ENCODE measurements at regions of chr19 and their contacts with region 1.

Region 1: DNA sequence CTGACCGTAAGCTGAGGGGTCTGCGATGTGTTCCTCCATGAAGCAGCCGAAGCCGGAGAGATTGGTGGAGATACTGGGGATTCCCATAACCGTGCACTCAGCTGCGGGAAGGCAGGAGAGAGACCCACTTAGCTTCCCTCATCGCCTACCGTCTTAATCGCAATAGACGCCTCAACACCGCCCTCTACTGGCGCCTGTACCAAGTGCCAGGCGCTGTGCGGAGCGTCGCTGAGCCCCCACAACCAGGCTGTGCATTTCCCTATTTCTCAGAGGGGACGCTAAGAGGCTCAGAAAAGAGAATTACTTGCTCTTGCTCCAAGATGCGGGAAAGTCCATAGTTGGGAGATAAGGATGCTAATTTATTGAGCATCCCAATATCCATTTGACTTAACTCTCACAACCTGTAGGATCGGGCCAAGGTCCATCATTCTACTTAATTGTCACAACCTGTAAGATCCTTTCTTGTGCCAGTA is 5.8 kb downstream of the FTL start:
- DNase-seq: peak; percentile 87
- ATAC-seq: peak; percentile 52
- H3K4me3 Mint-ChIP-seq: no peak overlapping the region
- H3K27ac Mint-ChIP-seq: no peak overlapping the region
- H3K4me1 Mint-ChIP-seq: peaks cover 31% of the 10 kb centered on the region
- H3K27me3 Mint-ChIP-seq: no peaks in the 10 kb centered on the region

Region 2: DNA sequence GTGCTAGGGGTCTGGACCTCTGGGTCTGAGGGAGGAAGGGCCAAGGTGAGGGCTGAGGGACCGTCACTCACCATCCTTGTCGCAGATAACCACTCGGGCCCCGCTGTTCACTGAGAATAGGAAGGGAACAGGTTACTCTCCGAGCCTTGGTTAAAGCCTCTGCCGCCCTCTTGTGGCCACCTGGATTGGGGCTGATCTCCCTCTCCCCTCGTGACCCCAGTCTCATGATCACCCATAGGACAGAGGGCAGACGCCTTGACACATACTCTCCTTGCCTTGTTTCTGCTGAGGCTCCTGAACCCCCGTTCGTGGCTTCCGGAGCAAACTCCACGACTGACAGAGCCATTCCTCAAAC is 135.2 kb before region 1 on chr19:
- CTCF ChIA-PET with region 1: interaction called, 27 read pairs
- DNase-seq: peak; percentile 97
- ATAC-seq: peak; percentile 92
- H3K4me3 Mint-ChIP-seq: peak overlapping the region; percentile 76
- H3K27ac Mint-ChIP-seq: peak overlapping the region; percentile 86
- H3K4me1 Mint-ChIP-seq: peaks cover 16% of the 10 kb centered on the region
- H3K27me3 Mint-ChIP-seq: no peaks in the 10 kb centered on the region

Region 3: DNA sequence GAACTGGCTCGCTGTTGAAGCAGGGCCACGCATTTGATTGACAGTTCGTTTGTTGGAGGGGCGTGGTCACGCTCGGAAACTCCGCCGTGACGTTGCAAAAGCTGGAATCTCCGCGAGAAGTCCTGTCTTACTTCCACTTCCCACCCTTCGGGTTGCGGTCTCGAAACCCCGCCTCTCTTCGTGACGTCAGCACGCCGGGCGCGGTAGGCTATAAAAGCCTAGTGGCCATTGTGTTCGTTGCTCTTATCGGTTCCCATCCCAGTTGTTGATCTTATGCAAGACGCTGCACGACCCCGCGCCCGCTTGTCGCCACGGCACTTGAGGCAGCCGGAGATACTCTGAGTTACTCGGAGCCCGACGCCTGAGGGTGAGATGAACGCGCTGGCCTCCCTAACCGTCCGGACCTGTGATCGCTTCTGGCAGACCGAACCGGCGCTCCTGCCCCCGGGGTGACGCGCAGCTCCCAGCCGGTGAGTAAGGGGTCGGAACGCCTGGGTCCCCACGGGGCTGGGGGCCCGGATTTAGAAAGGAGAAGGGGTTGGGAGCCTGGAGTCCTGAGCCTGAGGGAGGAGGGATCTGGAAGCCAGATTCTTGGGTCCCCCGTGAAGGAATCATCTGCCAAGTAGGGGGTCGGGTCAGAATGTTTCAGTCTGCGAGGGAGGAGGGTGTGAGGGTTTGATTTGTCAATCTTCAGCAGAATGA is 98.6 kb before region 1 on chr19 and contains the start of gene PPP1R15A:
- CTCF ChIA-PET with region 1: interaction called, 10 read pairs
- DNase-seq: peak; percentile 99
- ATAC-seq: peak; percentile 35
- H3K4me3 Mint-ChIP-seq: peak within 1 kb of the TSS; percentile 98
- H3K27ac Mint-ChIP-seq: peak within 1 kb of the TSS; percentile 100
- H3K4me1 Mint-ChIP-seq: peaks cover 39% of the 10 kb centered on the region
- H3K27me3 Mint-ChIP-seq: peaks cover 5% of the 10 kb centered on the region
- total RNA-seq, gene PPP1R15A: 32.1 to 89.7 TPM

Region 4: DNA sequence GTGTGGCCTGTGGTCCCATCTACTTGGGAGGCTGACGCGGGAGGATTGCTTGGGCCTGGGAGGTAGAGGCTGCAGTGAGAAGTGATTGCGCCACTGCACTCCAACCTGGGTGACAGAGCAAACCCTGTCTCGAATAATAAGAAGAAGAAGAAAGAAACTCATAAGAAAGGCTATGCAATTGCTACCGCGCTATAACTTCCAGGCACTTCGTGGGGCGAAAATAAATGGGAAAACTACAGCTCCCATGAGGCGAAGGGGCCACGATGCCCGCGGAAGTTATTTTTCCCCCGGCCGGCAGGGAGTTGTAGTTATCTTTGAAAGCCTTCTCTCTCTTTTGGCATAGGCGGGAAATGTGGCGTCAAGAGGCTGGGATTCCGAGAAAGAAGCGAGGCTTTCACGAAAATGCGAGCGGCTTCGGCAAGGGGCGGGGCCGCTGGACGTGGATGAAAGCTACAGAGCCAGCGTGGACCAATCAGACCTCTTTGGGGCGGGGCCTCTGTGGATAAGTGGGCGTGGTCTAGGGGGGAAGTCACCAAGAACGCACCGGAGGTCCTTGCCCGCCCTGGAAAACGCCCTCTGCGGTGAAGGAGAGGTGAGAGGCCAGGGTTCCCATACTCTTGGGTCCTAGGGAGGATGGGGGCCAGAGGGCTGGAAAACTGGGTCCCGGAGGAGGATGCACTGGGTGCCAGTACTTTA is 71.0 kb before region 1 on chr19 and contains the start of gene NUCB1:
- CTCF ChIA-PET with region 1: interaction called, 16 read pairs
- DNase-seq: peak; percentile 100
- ATAC-seq: peak; percentile 92
- H3K4me3 Mint-ChIP-seq: peak within 1 kb of the TSS; percentile 98
- H3K27ac Mint-ChIP-seq: peak within 1 kb of the TSS; percentile 98
- H3K4me1 Mint-ChIP-seq: peaks cover 33% of the 10 kb centered on the region
- H3K27me3 Mint-ChIP-seq: peaks cover 17% of the 10 kb centered on the region
- total RNA-seq, gene NUCB1: 185 to 226 TPM

Region 5: DNA sequence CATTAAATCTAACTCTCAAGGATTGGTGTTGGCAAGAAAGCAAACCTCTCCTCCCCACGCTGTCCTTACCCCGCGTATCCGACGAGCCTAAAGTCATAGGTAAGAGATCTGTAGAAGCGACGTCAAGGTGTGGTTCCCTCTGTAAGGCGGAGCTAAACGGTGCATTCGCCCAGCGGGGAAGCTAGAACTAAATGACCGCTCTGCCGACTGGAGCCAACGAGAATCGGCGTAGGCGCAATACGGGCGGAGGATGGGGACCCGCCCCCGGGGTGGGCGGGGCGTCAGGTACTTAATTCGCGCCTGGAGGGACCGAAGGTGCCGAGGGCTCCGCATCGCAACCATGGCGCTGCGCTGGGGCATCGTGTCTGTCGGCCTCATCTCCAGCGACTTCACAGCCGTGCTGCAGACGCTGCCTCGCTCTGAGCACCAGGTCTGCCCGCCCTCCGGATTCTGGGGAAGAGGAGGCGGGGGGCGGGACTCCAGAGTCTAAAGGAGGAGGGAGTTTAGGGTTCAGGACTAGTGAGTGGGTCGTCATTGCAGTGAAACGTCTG is 37.5 kb before region 1 on chr19 and contains the start of gene DHDH:
- CTCF ChIA-PET with region 1: interaction called, 14 read pairs
- DNase-seq: peak; percentile 90
- ATAC-seq: peak; percentile 99
- H3K4me3 Mint-ChIP-seq: peak within 1 kb of the TSS; percentile 78
- H3K27ac Mint-ChIP-seq: peak within 1 kb of the TSS; percentile 67
- H3K4me1 Mint-ChIP-seq: peaks cover 16% of the 10 kb centered on the region
- H3K27me3 Mint-ChIP-seq: peaks cover 11% of the 10 kb centered on the region
- total RNA-seq, gene DHDH: 0.96 to 1.1 TPM

Region 6: GRCh38 chr19:48954595-48955310 is 16.2 kb before region 1 on chr19 and contains the start of gene BAX:
- CTCF ChIA-PET with region 1: interaction called, 13 read pairs
- DNase-seq: peak; percentile 98
- ATAC-seq: peak; percentile 87
- H3K4me3 Mint-ChIP-seq: peak within 1 kb of the TSS; percentile 80
- H3K27ac Mint-ChIP-seq: peak within 1 kb of the TSS; percentile 84
- H3K4me1 Mint-ChIP-seq: peaks cover 45% of the 10 kb centered on the region
- H3K27me3 Mint-ChIP-seq: no peaks in the 10 kb centered on the region
- total RNA-seq, gene BAX: 359 to 377 TPM

Measured in activated CD8-positive, alpha-beta memory T cell treated with anti-CD3 and anti-CD28 coated beads, Interleukin-2, amount 10 ng/mL, durations not matched to agents 7 days and 5 days (primary cell).